CD4-positive, alpha-beta T cell (primary cell): ENCODE measurements at regions of chr16 and their contacts with region 1.

Region 1: GRCh38 chr16:68417711-68418301 is 30.5 kb downstream of the SMPD3 start:
- DNase-seq: peak; percentile 64 to 93 (median 81)
- ATAC-seq: peak; percentile 88
- H3K4me3 ChIP-seq: peak overlapping the region; percentile 34
- H3K4me3 Mint-ChIP-seq: peak overlapping the region; percentile 82
- H3K27ac ChIP-seq: peak overlapping the region; percentile 76 to 88
- H3K27ac Mint-ChIP-seq: peak overlapping the region; percentile 94
- H3K4me1 ChIP-seq: peaks cover 81% of the 10 kb centered on the region
- H3K4me1 Mint-ChIP-seq: peaks cover 81% of the 10 kb centered on the region
- H3K27me3 ChIP-seq: no peaks in the 10 kb centered on the region
- H3K27me3 Mint-ChIP-seq: no peaks in the 10 kb centered on the region
- CTCF ChIP-seq: no peak

Region 2: GRCh38 chr16:68298907-68299561 is 118.8 kb before region 1 on chr16:
- CTCF ChIA-PET with region 1: no interaction called
- POLR2A ChIA-PET with region 1: no interaction called
- intact Hi-C with region 1: no loop called
- DNase-seq: no peak
- ATAC-seq: no peak
- H3K4me3 ChIP-seq: no peak overlapping the region
- H3K4me3 Mint-ChIP-seq: peak overlapping the region; percentile 7
- H3K27ac ChIP-seq: no peak overlapping the region
- H3K27ac Mint-ChIP-seq: peak overlapping the region; percentile 43
- H3K4me1 ChIP-seq: peaks cover 13% of the 10 kb centered on the region
- H3K4me1 Mint-ChIP-seq: peaks cover 51% of the 10 kb centered on the region
- H3K27me3 ChIP-seq: no peaks in the 10 kb centered on the region
- H3K27me3 Mint-ChIP-seq: no peaks in the 10 kb centered on the region
- CTCF ChIP-seq: no peak

Region 3: DNA sequence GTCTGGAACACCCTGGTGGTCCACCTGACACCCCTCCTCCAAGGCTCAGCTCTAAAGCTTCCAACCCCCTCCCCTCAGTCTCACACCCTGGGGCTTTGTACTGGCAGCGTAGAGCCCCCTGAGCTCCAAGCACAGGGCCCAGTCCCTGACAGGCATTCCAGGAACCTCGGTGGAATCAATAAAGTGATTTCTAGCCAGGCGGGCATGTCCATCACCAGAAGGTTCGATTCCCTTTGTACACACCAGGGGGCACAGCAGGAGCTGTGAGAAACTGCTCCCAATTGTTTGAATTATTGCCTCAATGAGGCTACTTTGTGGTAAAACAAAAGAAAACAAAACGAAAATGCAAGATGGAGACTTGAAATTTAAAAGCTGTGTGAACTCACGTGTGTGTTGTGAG is 21.3 kb before region 1 on chr16:
- CTCF ChIA-PET with region 1: interaction called, 21 read pairs
- POLR2A ChIA-PET with region 1: interaction called, 26 read pairs
- intact Hi-C with region 1: no loop called
- DNase-seq: peak; percentile 40 to 79 (median 54)
- ATAC-seq: peak; percentile 67
- H3K4me3 ChIP-seq: no peak overlapping the region
- H3K4me3 Mint-ChIP-seq: no peak overlapping the region
- H3K27ac ChIP-seq: no peak overlapping the region
- H3K27ac Mint-ChIP-seq: no peak overlapping the region
- H3K4me1 ChIP-seq: peaks cover 32% of the 10 kb centered on the region
- H3K4me1 Mint-ChIP-seq: peaks cover 20% of the 10 kb centered on the region
- H3K27me3 ChIP-seq: no peaks in the 10 kb centered on the region
- H3K27me3 Mint-ChIP-seq: no peaks in the 10 kb centered on the region
- CTCF ChIP-seq: peak; percentile 83

Region 4: GRCh38 chr16:68436581-68436980 is 18.8 kb after region 1 on chr16:
- CTCF ChIA-PET with region 1: interaction called, 3 read pairs
- POLR2A ChIA-PET with region 1: interaction called, 20 read pairs
- intact Hi-C with region 1: no loop called
- DNase-seq: no peak
- ATAC-seq: no peak
- H3K4me3 ChIP-seq: no peak overlapping the region
- H3K4me3 Mint-ChIP-seq: no peak overlapping the region
- H3K27ac ChIP-seq: no peak overlapping the region
- H3K27ac Mint-ChIP-seq: no peak overlapping the region
- H3K4me1 ChIP-seq: peaks cover 9% of the 10 kb centered on the region
- H3K4me1 Mint-ChIP-seq: peaks cover 28% of the 10 kb centered on the region
- H3K27me3 ChIP-seq: peaks cover 0 to under 1% of the 10 kb centered on the region in 2 experiments
- H3K27me3 Mint-ChIP-seq: peaks cover 11% of the 10 kb centered on the region
- CTCF ChIP-seq: no peak

Region 5: GRCh38 chr16:68470461-68471150 is 52.8 kb after region 1 on chr16:
- CTCF ChIA-PET with region 1: no interaction called
- POLR2A ChIA-PET with region 1: interaction called, 18 read pairs
- intact Hi-C with region 1: no loop called
- DNase-seq: peak in 4 of 14 experiments; percentile 38 to 60 (median 50)
- ATAC-seq: peak; percentile 54
- H3K4me3 ChIP-seq: peak overlapping the region; percentile 37
- H3K4me3 Mint-ChIP-seq: peak overlapping the region; percentile 86
- H3K27ac ChIP-seq: peak overlapping the region; percentile 34 to 43
- H3K27ac Mint-ChIP-seq: peak overlapping the region; percentile 66
- H3K4me1 ChIP-seq: peaks cover 37% of the 10 kb centered on the region
- H3K4me1 Mint-ChIP-seq: peaks cover 48% of the 10 kb centered on the region
- H3K27me3 ChIP-seq: no peaks in the 10 kb centered on the region
- H3K27me3 Mint-ChIP-seq: no peaks in the 10 kb centered on the region
- CTCF ChIP-seq: no peak